Heart left ventricle (tissue), 16 donors: ENCODE measurements at regions of chr9 and their contacts with region 1.

Region 1: DNA sequence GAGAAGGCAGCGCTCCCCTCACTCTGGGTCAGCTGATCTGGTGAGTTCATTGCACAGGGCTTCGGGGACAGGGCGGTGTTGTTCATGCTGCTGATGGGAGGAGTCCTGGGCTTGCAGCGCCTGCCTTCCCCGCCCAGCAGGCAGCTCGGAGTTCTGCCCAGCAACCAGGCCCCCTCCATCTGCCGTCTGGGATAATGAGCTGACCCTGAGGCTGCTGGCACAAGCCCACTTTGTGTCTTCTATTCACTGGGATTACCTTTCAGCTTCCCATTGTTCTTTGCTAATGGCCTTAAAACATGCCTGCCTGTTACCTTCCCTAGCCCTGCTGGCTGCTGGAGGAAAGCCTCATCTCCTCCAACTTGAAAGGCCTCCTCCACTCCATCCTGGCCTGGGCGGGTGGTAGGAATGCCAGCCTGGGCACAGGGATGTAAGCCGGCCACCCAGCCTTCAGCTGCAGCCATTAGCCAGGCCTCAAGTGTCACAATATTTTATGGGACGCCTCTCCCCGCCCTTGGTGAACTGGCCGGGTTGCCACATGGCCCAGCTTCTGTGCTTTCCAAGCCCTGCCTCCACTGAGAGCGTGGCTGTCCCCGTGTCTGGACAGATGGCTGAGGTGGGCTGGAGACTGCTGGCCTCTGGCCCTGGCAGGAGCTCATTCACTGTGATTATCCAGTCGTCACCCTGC is 70.4 kb downstream of the GADD45G start:
- DNase-seq: peak in 4 of 5 donors; percentile 54 to 86 (median 60)
- ATAC-seq: peak; percentile 76 to 91 (median 80)
- H3K4me3 ChIP-seq: no peak overlapping the region
- H3K27ac ChIP-seq: peak overlapping the region in 9 of 12 donors; percentile 20 to 72 (median 68)
- H3K4me1 ChIP-seq: peaks cover 0 to 35% (median 13%) of the 10 kb centered on the region in 12 donors
- H3K27me3 ChIP-seq: no peaks in the 10 kb centered on the region
- CTCF ChIP-seq: no peak
- POLR2A ChIP-seq: no peak

Region 2: GRCh38 chr9:89353989-89354388 is 321.2 kb before region 1 on chr9:
- intact Hi-C with region 1: no loop called
- DNase-seq: no peak
- ATAC-seq: peak in 1 of 4 donors; percentile 38
- H3K4me3 ChIP-seq: no peak overlapping the region
- H3K27ac ChIP-seq: no peak overlapping the region
- H3K4me1 ChIP-seq: peaks cover 0 to 39% (median 11%) of the 10 kb centered on the region in 12 donors
- H3K27me3 ChIP-seq: no peaks in the 10 kb centered on the region
- CTCF ChIP-seq: no peak
- POLR2A ChIP-seq: no peak

Region 3: GRCh38 chr9:89623925-89624420 is 51.2 kb before region 1 on chr9:
- intact Hi-C with region 1: loop called in 2 of 10 experiments (anchors 5 to 10 kb)
- DNase-seq: peak; percentile 25 to 74 (median 46)
- ATAC-seq: peak; percentile 65 to 76 (median 68)
- H3K4me3 ChIP-seq: no peak overlapping the region
- H3K27ac ChIP-seq: peak overlapping the region; percentile 30 to 85 (median 72)
- H3K4me1 ChIP-seq: peaks cover 0 to 40% (median 20%) of the 10 kb centered on the region in 12 donors
- H3K27me3 ChIP-seq: no peaks in the 10 kb centered on the region
- CTCF ChIP-seq: peak in 3 of 12 donors; percentile 19 to 21 (median 19)
- POLR2A ChIP-seq: no peak

Region 4: DNA sequence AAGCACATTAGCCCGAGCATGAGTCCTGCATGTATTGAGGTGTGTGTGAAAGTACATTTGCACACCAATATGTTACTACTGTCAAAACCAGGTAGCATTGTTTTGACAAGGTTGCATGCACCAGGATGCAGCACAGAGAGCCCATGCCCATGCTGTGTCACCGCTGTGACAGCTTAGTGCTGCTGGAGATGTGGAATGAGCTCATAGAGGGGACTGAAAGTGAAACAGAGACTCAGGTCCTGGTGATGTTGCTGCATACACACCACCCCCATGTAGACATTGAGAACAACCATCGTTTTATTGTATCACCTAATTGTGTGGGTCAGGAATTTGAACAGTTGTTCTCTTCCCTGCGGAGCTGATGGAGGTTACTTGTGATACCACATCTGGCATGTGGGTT is 17.4 kb before region 1 on chr9:
- intact Hi-C with region 1: no loop called
- DNase-seq: no peak
- ATAC-seq: no peak
- H3K4me3 ChIP-seq: no peak overlapping the region
- H3K27ac ChIP-seq: no peak overlapping the region
- H3K4me1 ChIP-seq: peaks cover 5 to 31% (median 18%) of the 10 kb centered on the region in 12 donors
- H3K27me3 ChIP-seq: no peaks in the 10 kb centered on the region
- CTCF ChIP-seq: no peak
- POLR2A ChIP-seq: no peak

Region 5: DNA sequence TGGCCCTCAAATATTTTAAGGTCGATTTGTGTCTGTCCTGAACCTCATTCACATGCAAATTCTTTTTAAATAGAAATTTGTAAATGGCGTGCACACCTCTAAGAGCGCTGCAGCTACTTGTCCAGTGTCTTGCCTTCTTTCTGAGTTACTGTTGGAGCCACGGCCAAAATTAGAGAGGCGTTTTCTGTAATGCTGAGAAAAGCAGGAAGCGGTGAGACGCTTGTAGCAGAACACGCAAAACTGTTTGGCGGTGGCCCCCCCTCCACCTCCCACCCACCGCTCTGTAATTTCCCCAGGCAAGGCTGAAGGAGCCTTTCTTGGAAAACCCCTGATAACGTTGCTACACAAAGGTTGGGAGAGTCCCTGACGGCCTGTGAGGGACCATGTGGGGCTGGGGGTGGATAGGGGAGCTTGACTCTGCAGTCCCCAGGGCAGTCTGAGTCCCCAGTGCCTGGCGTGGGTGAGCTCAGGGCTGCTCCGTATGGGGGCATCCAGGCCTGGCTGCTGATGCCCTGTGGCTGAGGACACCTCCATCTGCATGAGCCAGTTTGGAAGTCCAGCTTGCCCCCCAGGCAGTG is 26.1 kb after region 1 on chr9:
- intact Hi-C with region 1: no loop called
- DNase-seq: no peak
- ATAC-seq: peak in 1 of 4 donors; percentile 73
- H3K4me3 ChIP-seq: peak overlapping the region in 1 of 12 donors; percentile 5
- H3K27ac ChIP-seq: no peak overlapping the region
- H3K4me1 ChIP-seq: peaks cover 0 to 17% (median 0%) of the 10 kb centered on the region in 12 donors
- H3K27me3 ChIP-seq: no peaks in the 10 kb centered on the region
- CTCF ChIP-seq: no peak
- POLR2A ChIP-seq: no peak

Region 6: DNA sequence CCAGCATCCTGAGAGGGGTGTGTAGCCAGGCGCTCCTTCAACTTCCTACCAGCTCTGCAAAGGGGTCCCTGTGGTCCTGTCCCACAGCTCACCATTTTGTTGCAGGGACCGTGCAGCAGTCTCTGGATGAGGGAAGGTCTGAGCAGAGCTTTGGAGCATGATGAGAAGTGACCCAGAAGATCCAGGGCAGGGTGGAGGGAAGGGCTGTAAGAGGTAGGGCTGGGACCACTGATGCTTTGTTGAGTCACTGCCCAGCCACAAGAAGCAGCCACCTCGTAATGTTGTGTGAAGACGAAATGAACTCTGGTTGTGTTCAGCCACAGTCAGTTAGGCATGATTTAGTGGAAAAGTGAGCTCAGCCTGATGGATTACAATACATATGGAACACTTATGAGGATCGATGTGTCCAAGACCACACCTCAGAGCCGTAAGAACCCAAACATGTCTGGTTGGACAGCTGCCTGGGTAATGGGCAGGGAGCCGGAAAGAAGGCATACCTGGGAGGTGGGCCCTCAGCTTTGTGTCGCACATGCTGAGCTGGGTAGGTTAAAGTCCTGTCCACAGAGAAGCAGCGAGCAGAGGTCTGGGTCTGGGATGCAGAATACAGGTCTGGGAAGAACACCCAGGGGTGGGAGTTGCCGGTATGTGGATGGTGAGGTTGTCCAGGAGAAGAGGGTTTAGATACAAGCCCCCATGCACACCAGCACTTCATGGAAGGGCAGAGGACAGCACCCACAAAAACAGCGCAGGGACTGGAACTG is 179.7 kb after region 1 on chr9:
- intact Hi-C with region 1: no loop called
- DNase-seq: no peak
- ATAC-seq: no peak
- H3K4me3 ChIP-seq: no peak overlapping the region
- H3K27ac ChIP-seq: no peak overlapping the region
- H3K4me1 ChIP-seq: peaks cover 0 to 8% (median 0%) of the 10 kb centered on the region in 12 donors
- H3K27me3 ChIP-seq: no peaks in the 10 kb centered on the region
- CTCF ChIP-seq: no peak
- POLR2A ChIP-seq: no peak